ENCODE measurements at regions of chr12 and their contacts with region 1.

Region 1: GRCh38 chr12:1117970-1118563 is 127.0 kb downstream of the ERC1 start:
- DNase-seq: peak; percentile 78
- H3K4me3 Mint-ChIP-seq: no peak overlapping the region
- H3K27ac Mint-ChIP-seq: no peak overlapping the region
- H3K4me1 Mint-ChIP-seq: peaks cover 17% of the 10 kb centered on the region
- H3K27me3 Mint-ChIP-seq: no peaks in the 10 kb centered on the region

Region 2: DNA sequence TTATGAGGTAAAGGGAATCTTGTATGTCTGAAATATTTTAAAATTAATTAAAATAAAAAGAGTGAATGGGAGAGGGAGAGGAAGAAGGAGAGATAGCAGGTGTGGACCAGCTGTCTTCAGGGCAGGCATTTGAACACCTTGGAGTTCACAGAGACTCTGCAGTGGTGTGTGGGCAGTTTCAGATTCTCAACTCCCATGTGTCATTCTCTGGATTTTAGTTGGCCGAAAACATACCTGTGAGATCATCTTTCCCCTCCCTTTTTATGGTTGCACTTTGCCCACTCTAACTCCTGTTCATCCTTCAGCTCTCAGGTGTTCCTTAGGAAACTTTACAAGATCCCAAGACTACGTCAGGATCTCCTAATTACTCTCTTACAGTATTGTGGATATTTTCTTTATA is 18.9 kb before region 1 on chr12:
- CTCF ChIA-PET with region 1: interaction called, 51 read pairs
- POLR2A ChIA-PET with region 1: no interaction called
- intact Hi-C with region 1: no loop called
- DNase-seq: peak; percentile 67
- H3K4me3 Mint-ChIP-seq: no peak overlapping the region
- H3K27ac Mint-ChIP-seq: no peak overlapping the region
- H3K4me1 Mint-ChIP-seq: peaks cover 35% of the 10 kb centered on the region
- H3K27me3 Mint-ChIP-seq: no peaks in the 10 kb centered on the region

Region 3: DNA sequence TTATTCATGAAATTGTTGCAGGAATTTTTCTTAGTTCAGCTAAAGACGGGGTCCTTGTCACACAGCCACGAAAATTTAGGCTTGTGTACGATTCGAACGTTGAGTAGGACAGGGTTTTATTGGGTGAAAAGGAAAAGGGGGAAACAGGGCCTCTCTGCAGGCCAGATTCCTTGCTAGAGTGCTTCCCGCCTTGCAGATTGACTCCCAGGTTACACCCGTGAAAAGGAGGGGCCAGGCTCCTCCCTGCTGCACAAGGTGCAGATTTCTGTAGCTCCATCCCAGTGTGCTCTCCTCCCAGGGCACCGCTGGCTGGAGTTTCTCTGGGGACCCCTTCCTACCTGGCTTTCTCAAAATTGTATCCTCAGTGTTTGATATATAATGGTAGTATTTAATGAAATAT is 94.5 kb after region 1 on chr12:
- CTCF ChIA-PET with region 1: interaction called, 4 read pairs
- POLR2A ChIA-PET with region 1: no interaction called
- intact Hi-C with region 1: loop called (anchors 5 kb)
- DNase-seq: no peak
- H3K4me3 Mint-ChIP-seq: no peak overlapping the region
- H3K27ac Mint-ChIP-seq: no peak overlapping the region
- H3K4me1 Mint-ChIP-seq: peaks cover 12% of the 10 kb centered on the region
- H3K27me3 Mint-ChIP-seq: no peaks in the 10 kb centered on the region

Region 4: GRCh38 chr12:1488908-1489381 is 370.9 kb after region 1 on chr12:
- CTCF ChIA-PET with region 1: interaction called, 15 read pairs
- POLR2A ChIA-PET with region 1: no interaction called
- intact Hi-C with region 1: no loop called
- DNase-seq: peak; percentile 15
- H3K4me3 Mint-ChIP-seq: no peak overlapping the region
- H3K27ac Mint-ChIP-seq: no peak overlapping the region
- H3K4me1 Mint-ChIP-seq: peaks cover 14% of the 10 kb centered on the region
- H3K27me3 Mint-ChIP-seq: no peaks in the 10 kb centered on the region

Region 5: DNA sequence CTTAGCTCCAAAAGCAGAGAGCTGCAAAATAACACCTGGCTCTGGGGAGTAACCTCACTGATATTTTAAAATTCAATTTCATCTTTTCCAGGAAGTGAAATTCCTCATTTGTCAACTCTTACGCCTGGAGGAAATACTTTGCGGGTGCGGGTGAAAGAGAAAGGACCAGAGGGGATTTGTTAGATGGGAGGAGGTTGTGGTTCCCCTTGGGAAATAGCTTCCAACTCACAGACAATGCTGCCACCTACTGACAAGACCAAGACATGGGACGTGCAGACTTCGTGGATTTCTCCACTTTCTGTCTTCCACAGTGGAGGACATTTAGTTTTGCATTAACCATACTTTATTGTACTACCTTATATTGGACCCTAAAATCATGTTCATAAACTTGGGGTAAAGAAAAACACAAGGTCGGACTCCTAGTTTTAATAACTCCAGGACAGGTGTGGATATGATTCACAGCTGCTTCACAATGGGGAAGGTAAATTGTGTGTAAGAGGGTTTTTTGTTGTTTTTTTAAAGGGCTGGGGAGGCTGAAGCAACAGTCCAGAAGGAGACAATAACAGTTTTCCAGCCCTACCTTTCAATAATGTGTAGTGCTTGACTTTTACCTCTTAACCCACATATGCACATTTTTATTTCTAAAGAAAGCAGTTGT is 465.5 kb after region 1 on chr12:
- CTCF ChIA-PET with region 1: interaction called, 308 read pairs
- POLR2A ChIA-PET with region 1: no interaction called
- intact Hi-C with region 1: loop called (anchors 1 kb)
- DNase-seq: peak; percentile 75
- H3K4me3 Mint-ChIP-seq: no peak overlapping the region
- H3K27ac Mint-ChIP-seq: no peak overlapping the region
- H3K4me1 Mint-ChIP-seq: peaks cover 17% of the 10 kb centered on the region
- H3K27me3 Mint-ChIP-seq: no peaks in the 10 kb centered on the region

Region 6: GRCh38 chr12:1634590-1635191 is 516.6 kb after region 1 on chr12:
- CTCF ChIA-PET with region 1: interaction called, 12 read pairs
- POLR2A ChIA-PET with region 1: no interaction called
- intact Hi-C with region 1: no loop called
- DNase-seq: peak; percentile 75
- H3K4me3 Mint-ChIP-seq: no peak overlapping the region
- H3K27ac Mint-ChIP-seq: no peak overlapping the region
- H3K4me1 Mint-ChIP-seq: peaks cover 9% of the 10 kb centered on the region
- H3K27me3 Mint-ChIP-seq: peaks cover 48% of the 10 kb centered on the region

Measured in activated CD4-positive, alpha-beta memory T cell treated with anti-CD3 and anti-CD28 coated beads for 36 hours (primary cell).